Naive thymus-derived CD4-positive, alpha-beta T cell (primary cell): ENCODE measurements at regions of chr1 and their contacts with region 1.

Region 1: DNA sequence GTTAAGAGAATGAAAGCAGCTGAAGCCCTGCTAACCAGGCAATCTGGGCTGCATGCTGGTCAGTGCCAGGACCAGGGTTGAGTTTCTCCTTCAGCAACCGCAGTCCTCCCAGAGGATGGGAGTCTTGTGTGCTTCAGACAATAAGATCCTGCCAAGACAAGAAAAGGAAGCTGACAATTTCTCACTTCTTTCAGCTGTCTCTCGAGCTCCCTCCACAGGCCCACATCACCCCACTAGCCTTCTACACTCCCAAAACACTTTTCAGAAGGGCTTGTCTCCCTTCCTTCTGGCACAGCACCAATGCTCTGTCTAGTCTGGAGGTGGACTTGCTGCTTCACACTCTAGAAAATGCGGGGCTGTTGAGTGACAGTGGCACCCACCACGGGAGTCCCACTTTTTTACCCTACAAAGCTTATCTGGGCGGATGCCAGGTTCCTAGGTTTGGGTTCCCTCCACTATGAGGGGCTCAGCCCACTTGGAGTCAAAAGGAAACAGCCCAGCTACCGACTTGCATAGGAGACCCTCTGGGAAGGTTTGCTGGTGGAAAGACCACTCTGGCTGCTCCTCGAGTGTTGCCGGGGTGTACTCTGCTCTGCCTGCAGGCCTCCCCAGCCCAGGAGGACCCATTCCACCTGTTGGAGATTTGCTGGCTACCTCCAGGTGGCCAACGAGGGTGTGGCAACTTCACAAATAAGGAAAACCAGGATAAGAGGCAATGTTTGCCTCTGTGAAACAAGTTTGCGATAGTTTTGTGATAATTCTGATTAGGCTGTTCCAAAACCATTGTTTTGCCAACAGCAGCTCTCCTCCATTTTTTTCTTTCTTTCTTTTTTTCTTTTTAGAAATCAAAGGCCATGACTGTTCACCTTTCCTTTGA is 68.9 kb downstream of the TENT5C start:
- DNase-seq: peak in 7 of 9 donors; percentile 52 to 67 (median 58)
- ATAC-seq: peak; percentile 80
- H3K4me3 ChIP-seq: no peak overlapping the region
- H3K4me3 Mint-ChIP-seq: no peak overlapping the region
- H3K27ac ChIP-seq: no peak overlapping the region
- H3K27ac Mint-ChIP-seq: peak overlapping the region in 3 of 9 donors; percentile 53 to 68 (median 65)
- H3K4me1 ChIP-seq: peaks cover 0 to 5% of the 10 kb centered on the region in 2 donors
- H3K4me1 Mint-ChIP-seq: peaks cover 0 to 25% (median 4%) of the 10 kb centered on the region in 7 donors
- H3K27me3 ChIP-seq: no peaks in the 10 kb centered on the region
- H3K27me3 Mint-ChIP-seq: peaks cover 0 to 32% (median 0%) of the 10 kb centered on the region in 5 donors

Region 2: GRCh38 chr1:117512743-117513321 is 161.9 kb before region 1 on chr1:
- CTCF ChIA-PET with region 1: interaction called, 3 read pairs
- POLR2A ChIA-PET with region 1: no interaction called
- intact Hi-C with region 1: loop called (anchors 1 kb)
- DNase-seq: peak in 5 of 9 donors; percentile 22 to 34 (median 25)
- ATAC-seq: peak; percentile 57
- H3K4me3 ChIP-seq: no peak overlapping the region
- H3K4me3 Mint-ChIP-seq: no peak overlapping the region
- H3K27ac ChIP-seq: no peak overlapping the region
- H3K27ac Mint-ChIP-seq: no peak overlapping the region
- H3K4me1 ChIP-seq: no peaks in the 10 kb centered on the region
- H3K4me1 Mint-ChIP-seq: peaks cover 0 to 3% (median 0%) of the 10 kb centered on the region in 7 donors
- H3K27me3 ChIP-seq: no peaks in the 10 kb centered on the region
- H3K27me3 Mint-ChIP-seq: no peaks in the 10 kb centered on the region

Region 3: GRCh38 chr1:117534995-117535467 is 139.7 kb before region 1 on chr1:
- CTCF ChIA-PET with region 1: interaction called, 118 read pairs
- POLR2A ChIA-PET with region 1: interaction called, 3 read pairs
- intact Hi-C with region 1: loop called (anchors 1 kb)
- DNase-seq: peak; percentile 22 to 74 (median 60)
- ATAC-seq: peak; percentile 88
- H3K4me3 ChIP-seq: no peak overlapping the region
- H3K4me3 Mint-ChIP-seq: peak overlapping the region in 1 of 10 donors; percentile 17
- H3K27ac ChIP-seq: no peak overlapping the region
- H3K27ac Mint-ChIP-seq: peak overlapping the region in 4 of 9 donors; percentile 1 to 36 (median 14)
- H3K4me1 ChIP-seq: peaks cover 7 to 8% of the 10 kb centered on the region in 2 donors
- H3K4me1 Mint-ChIP-seq: peaks cover 0 to 9% (median 3%) of the 10 kb centered on the region in 7 donors
- H3K27me3 ChIP-seq: no peaks in the 10 kb centered on the region
- H3K27me3 Mint-ChIP-seq: no peaks in the 10 kb centered on the region

Region 4: DNA sequence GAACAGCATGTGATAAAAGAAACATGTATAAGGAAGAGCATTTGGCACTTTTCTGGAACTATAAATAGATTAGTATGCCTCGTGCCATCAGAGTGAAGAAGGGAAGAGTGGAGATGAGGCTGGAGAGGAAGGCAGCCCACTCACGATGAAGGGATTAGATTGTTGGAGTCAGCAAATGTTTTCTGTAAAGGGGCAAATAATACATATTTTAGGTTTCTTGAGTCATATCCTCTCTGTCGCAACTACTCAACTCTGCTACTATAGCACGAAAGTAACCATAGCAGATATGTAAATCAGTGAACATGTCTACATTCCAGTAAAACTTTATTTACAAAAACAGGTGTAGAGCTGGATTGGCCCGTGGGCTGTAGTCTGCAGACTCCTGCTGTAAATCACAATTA is 78.9 kb after region 1 on chr1:
- CTCF ChIA-PET with region 1: interaction called, 5 read pairs
- POLR2A ChIA-PET with region 1: interaction called, 5 read pairs
- intact Hi-C with region 1: loop called (anchors 1 to 2 kb)
- DNase-seq: no peak
- ATAC-seq: no peak
- H3K4me3 ChIP-seq: no peak overlapping the region
- H3K4me3 Mint-ChIP-seq: no peak overlapping the region
- H3K27ac ChIP-seq: no peak overlapping the region
- H3K27ac Mint-ChIP-seq: no peak overlapping the region
- H3K4me1 ChIP-seq: peaks cover 0 to 3% of the 10 kb centered on the region in 2 donors
- H3K4me1 Mint-ChIP-seq: peaks cover 0 to 14% (median 5%) of the 10 kb centered on the region in 7 donors
- H3K27me3 ChIP-seq: no peaks in the 10 kb centered on the region
- H3K27me3 Mint-ChIP-seq: peaks cover 6 to 56% (median 20%) of the 10 kb centered on the region in 5 donors